Activated CD8-positive, alpha-beta T cell treated with anti-CD3 and anti-CD28 coated beads, Interleukin-2, amount 10 ng/mL, durations not matched to agents 7 days and 5 days (primary cell): ENCODE measurements at regions of chr1 and their contacts with region 1.

Region 1: DNA sequence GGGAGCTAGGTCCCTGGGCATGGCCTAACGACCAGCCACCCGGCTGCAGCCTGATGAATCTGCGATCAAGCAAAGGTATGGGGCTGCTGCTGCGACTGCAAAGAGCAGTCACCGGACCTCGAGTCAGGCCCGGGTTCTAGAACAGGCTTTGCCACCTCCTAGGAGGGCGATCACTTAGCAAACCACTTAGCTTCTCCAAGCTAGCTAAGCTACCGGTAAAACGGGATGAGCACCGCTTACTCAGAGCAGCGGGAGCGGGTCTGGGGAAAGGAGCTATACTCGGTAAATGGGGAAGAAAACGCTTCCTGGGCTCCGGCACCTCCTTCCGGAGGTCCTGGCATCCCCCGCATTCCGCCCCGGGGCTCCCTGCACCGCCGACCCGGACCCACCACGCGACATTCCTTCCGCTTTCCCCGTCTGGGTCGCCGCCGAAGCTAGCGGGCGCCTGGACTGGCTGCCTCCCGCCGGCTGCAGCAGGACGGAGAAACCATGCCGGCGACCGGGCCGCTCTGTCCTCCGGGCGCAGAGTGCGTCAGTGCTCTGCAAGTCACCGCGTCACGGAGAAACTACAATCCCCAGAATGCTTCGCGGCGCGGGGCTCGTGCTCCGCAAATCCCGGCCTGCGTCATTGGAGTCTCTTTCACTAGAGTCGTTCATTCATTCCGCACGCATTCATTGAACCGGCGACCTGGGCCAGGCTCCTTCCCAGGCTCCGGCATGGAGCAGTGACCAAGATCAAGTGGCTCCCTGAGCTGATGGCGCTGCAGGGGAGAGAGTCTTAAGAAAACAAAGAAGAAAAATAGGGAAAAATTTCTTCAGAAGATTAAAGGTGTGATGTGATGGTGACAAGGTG is at the start of gene LSM10:
- DNase-seq: peak; percentile 95
- ATAC-seq: peak; percentile 94
- H3K4me3 Mint-ChIP-seq: peak within 1 kb of the TSS; percentile 94
- H3K27ac Mint-ChIP-seq: peak within 1 kb of the TSS; percentile 96
- H3K4me1 Mint-ChIP-seq: peaks cover 43% of the 10 kb centered on the region
- H3K27me3 Mint-ChIP-seq: no peaks in the 10 kb centered on the region
- total RNA-seq, gene LSM10: 44.7 to 47.5 TPM

Region 2: GRCh38 chr1:36300526-36300925 is 97.1 kb before region 1 on chr1:
- CTCF ChIA-PET with region 1: no interaction called
- POLR2A ChIA-PET with region 1: no interaction called
- DNase-seq: no peak
- ATAC-seq: no peak
- H3K4me3 Mint-ChIP-seq: no peak overlapping the region
- H3K27ac Mint-ChIP-seq: peak overlapping the region; percentile 12
- H3K4me1 Mint-ChIP-seq: peaks cover 7% of the 10 kb centered on the region
- H3K27me3 Mint-ChIP-seq: no peaks in the 10 kb centered on the region

Region 3: DNA sequence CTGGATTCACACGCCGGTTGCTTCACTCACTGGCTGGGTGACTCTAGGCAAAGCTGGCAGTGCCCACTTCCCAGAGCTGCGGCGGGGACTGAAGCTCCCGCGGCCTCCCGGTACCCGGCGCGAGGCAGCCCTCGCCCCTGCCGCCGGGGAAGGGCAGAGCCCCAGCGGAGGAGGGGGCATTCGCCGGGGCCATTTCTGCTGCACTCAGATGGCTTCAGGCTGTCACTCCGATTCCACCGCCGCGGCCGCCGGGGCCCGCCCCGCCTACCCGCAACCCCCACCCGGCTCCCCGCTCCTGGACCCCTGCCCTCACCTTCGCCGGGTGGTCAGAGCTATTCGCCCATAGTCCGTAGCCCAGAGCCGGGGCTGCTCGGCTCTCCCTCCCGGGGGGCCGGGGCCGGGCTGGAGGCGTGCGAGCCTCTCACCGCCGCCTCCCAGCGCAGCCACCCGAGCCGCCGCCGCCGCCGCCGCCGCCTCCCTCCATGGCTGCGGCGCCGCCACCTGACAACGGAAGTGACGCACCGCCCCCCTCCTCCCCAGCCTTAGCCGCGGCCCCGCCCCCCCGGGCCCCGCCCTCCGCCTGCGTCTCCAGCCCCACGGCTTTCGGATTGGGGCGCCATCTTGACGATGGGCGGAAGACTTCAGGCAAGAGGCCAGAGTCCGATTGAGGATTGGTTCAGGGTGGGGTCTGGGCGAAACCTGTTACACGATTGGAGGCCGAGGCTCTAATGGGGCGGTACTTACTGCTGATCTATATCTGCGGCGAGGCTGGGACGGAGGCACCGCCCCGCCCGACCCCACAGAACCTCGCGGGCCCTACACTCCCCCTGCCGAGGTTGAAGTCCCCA is 12.0 kb before region 1 on chr1 and contains the start of gene STK40:
- CTCF ChIA-PET with region 1: interaction called, 28 read pairs
- POLR2A ChIA-PET with region 1: interaction called, 59 read pairs
- DNase-seq: peak; percentile 99
- ATAC-seq: peak; percentile 92
- H3K4me3 Mint-ChIP-seq: peak within 1 kb of the TSS; percentile 86
- H3K27ac Mint-ChIP-seq: peak within 1 kb of the TSS; percentile 99
- H3K4me1 Mint-ChIP-seq: peaks cover 54% of the 10 kb centered on the region
- H3K27me3 Mint-ChIP-seq: no peaks in the 10 kb centered on the region
- total RNA-seq, gene STK40: 69.7 to 72.4 TPM

Region 4: DNA sequence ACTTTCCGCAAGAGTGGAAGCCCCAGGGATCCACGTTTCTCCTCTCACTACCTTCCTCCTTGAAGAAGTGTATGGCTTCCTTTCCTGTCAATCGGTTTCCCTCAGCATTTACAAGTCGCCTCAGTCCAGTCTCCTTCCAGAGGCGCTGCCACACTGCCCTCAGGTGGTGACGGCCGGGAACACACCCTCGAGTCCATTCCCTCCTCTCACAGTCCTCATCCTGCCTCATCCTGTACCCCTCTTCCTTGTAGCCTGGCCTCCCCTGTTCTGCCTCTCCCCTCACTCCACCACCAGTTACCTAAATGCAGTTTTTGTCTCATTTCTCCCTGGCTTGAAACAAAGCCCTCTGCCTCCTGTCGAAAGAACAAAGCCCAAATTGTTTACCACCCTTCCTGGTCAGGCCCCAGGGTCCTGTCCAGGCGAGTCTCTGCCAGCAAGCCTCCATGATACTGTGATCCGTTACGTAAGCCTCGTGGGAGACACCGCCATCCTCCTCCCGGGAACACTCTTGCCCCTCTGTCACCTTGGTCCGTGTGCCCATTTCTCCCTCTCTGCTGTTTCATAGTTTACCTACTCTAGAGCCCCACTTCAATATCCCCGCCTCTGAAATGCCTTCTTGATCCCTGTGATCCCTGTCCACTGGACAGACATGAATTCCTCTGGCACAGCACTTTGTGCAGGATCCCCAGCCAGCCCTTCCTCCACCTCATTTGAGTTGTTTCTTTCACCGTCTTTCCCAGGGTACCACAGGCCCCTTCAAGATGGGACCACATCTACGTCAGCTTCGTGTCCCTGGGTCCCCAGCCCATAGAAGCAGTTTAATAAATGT is 23.4 kb after region 1 on chr1:
- CTCF ChIA-PET with region 1: interaction called, 15 read pairs
- POLR2A ChIA-PET with region 1: no interaction called
- DNase-seq: peak; percentile 94
- ATAC-seq: peak; percentile 98
- H3K4me3 Mint-ChIP-seq: peak overlapping the region; percentile 53
- H3K27ac Mint-ChIP-seq: peak overlapping the region; percentile 82
- H3K4me1 Mint-ChIP-seq: peaks cover 16% of the 10 kb centered on the region
- H3K27me3 Mint-ChIP-seq: no peaks in the 10 kb centered on the region

Region 5: GRCh38 chr1:36450270-36450918 is 52.8 kb after region 1 on chr1 and contains the start of gene OSCP1:
- CTCF ChIA-PET with region 1: no interaction called
- POLR2A ChIA-PET with region 1: no interaction called
- DNase-seq: peak; percentile 91
- ATAC-seq: peak; percentile 99
- H3K4me3 Mint-ChIP-seq: peak within 1 kb of the TSS; percentile 87
- H3K27ac Mint-ChIP-seq: peak within 1 kb of the TSS; percentile 91
- H3K4me1 Mint-ChIP-seq: peaks cover 27% of the 10 kb centered on the region
- H3K27me3 Mint-ChIP-seq: no peaks in the 10 kb centered on the region
- total RNA-seq, gene OSCP1: 0.66 to 1.9 TPM